ENCODE measurements at regions of chr12 and their contacts with region 1.

Region 1: DNA sequence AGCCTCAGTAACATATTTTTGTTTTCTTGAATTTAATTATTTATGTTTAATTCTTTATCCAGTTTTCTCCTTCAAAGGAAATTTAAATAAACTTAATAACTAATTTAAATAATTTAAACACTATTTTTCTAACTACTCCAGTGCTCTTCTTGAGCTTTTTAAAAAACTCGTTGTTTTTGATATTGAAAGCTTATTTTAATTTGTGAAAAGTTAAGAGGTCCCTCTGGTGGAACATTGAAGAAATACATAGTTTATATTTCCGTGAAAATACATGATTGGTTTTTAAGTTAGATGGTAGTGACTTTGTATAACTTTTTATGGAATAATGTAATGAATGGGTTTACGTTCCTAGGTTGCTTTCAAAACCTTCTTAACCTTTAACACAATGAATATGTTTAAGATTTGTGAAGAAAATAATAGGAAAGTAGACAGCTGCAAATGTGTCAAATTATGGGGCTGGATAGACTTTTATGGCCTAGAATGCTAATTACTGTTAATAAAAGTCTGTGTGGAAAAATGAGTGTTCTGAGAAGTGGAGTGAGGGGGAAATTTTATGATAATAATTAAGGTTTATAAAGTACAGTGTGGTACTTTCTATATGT is 45.9 kb upstream of the MSRB3 start:
- DNase-seq: no peak
- ATAC-seq: peak; percentile 50; the same call in 1 of the 3 replicates
- H3K4me3 ChIP-seq: no peak overlapping the region
- H3K27ac ChIP-seq: no peak overlapping the region
- H3K4me1 ChIP-seq: no peaks in the 10 kb centered on the region
- H3K27me3 ChIP-seq: no peaks in the 10 kb centered on the region
- CTCF ChIP-seq: peak in 1 of 3 experiments; percentile 33; a peak in 3 of 6 replicates
- EP300 ChIP-seq: no peak
- POLR2A ChIP-seq: no peak
- RAD21 ChIP-seq: peak; percentile 57

Region 2: DNA sequence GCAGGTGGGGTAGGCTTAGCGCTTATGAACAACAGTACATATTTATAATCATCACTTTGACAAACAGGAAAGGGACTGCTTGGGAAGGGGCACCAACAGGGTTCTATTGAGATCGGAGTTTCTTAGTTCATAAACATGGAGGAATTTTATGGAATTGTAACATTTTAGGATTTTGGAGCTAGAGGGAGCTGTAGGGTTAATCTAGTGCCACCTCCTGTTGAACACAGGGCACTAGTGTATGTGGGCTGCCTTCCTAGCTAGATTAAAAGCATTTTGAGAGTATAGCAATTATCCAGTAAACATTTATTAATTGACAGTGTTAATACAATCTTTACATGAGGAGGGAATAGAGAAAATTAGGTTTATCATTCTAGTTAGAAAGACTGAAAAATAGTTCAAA is 431.2 kb before region 1 on chr12:
- CTCF ChIA-PET with region 1: interaction called, 38 read pairs
- POLR2A ChIA-PET with region 1: no interaction called
- RAD21 ChIA-PET with region 1: interaction called, 39 read pairs
- SMC1A ChIA-PET with region 1: interaction called, 29 read pairs
- in situ Hi-C with region 1: loop called (anchors 10 kb)
- intact Hi-C with region 1: loop called (anchors 2 kb)
- DNase-seq: no peak
- ATAC-seq: peak; percentile 46
- H3K4me3 ChIP-seq: no peak overlapping the region
- H3K27ac ChIP-seq: peak overlapping the region; percentile 69
- H3K4me1 ChIP-seq: peaks cover 19% of the 10 kb centered on the region
- H3K27me3 ChIP-seq: no peaks in the 10 kb centered on the region
- CTCF ChIP-seq: peak; percentile 9 to 47 (median 28); a peak in 5 of 6 replicates
- EP300 ChIP-seq: no peak
- POLR2A ChIP-seq: no peak
- RAD21 ChIP-seq: no peak

Region 3: GRCh38 chr12:65106948-65107347 is 125.6 kb before region 1 on chr12:
- CTCF ChIA-PET with region 1: interaction called, 22 read pairs
- POLR2A ChIA-PET with region 1: no interaction called
- RAD21 ChIA-PET with region 1: interaction called, 8 read pairs
- SMC1A ChIA-PET with region 1: interaction called, 18 read pairs
- in situ Hi-C with region 1: no loop called
- intact Hi-C with region 1: no loop called
- DNase-seq: no peak
- ATAC-seq: no peak
- H3K4me3 ChIP-seq: no peak overlapping the region
- H3K27ac ChIP-seq: no peak overlapping the region
- H3K4me1 ChIP-seq: no peaks in the 10 kb centered on the region
- H3K27me3 ChIP-seq: no peaks in the 10 kb centered on the region; a peak in 1 of 4 replicates
- CTCF ChIP-seq: peak; percentile 33 to 50 (median 39); a peak in 4 of 6 replicates
- EP300 ChIP-seq: no peak
- POLR2A ChIP-seq: no peak
- RAD21 ChIP-seq: peak; percentile 33

Region 4: DNA sequence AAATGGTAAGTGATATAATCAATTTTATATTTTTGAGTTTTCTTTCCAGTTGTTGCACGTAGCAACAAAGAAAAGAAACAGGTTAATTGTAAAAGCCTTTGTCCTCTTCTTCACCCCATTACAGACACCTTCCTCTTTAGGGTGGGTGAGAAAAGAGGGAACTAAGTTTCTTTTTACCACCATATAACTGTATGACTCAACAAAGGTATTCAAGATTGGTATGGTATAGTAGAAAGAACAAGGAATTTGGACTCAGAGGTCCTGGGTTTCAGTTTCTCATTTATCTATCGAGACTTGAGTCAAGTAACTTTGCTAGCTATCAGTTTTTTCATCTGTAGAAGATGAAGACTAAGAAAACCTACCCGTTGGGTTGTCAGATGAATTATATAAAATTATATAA is 68.8 kb before region 1 on chr12:
- CTCF ChIA-PET with region 1: interaction called, 27 read pairs
- POLR2A ChIA-PET with region 1: interaction called, 4 read pairs
- RAD21 ChIA-PET with region 1: interaction called, 91 read pairs
- SMC1A ChIA-PET with region 1: interaction called, 66 read pairs
- in situ Hi-C with region 1: no loop called
- intact Hi-C with region 1: no loop called
- DNase-seq: no peak
- ATAC-seq: peak; percentile 92
- H3K4me3 ChIP-seq: no peak overlapping the region
- H3K27ac ChIP-seq: no peak overlapping the region
- H3K4me1 ChIP-seq: peaks cover 16% of the 10 kb centered on the region
- H3K27me3 ChIP-seq: no peaks in the 10 kb centered on the region
- CTCF ChIP-seq: no peak
- EP300 ChIP-seq: no peak
- POLR2A ChIP-seq: no peak
- RAD21 ChIP-seq: no peak

Region 5: GRCh38 chr12:65189028-65189718 is 43.4 kb before region 1 on chr12:
- CTCF ChIA-PET with region 1: interaction called, 7 read pairs
- POLR2A ChIA-PET with region 1: interaction called, 5 read pairs
- RAD21 ChIA-PET with region 1: interaction called, 12 read pairs
- SMC1A ChIA-PET with region 1: interaction called, 19 read pairs
- in situ Hi-C with region 1: no loop called
- intact Hi-C with region 1: no loop called
- DNase-seq: no peak
- ATAC-seq: peak; percentile 91
- H3K4me3 ChIP-seq: peak overlapping the region; percentile 30; the same call in 1 of the 2 replicates
- H3K27ac ChIP-seq: peak overlapping the region; percentile 83
- H3K4me1 ChIP-seq: peaks cover 33% of the 10 kb centered on the region
- H3K27me3 ChIP-seq: no peaks in the 10 kb centered on the region
- CTCF ChIP-seq: no peak
- EP300 ChIP-seq: peak in 1 of 2 experiments; percentile 48; a peak in 1 of 4 replicates
- POLR2A ChIP-seq: no peak
- RAD21 ChIP-seq: no peak

Region 6: DNA sequence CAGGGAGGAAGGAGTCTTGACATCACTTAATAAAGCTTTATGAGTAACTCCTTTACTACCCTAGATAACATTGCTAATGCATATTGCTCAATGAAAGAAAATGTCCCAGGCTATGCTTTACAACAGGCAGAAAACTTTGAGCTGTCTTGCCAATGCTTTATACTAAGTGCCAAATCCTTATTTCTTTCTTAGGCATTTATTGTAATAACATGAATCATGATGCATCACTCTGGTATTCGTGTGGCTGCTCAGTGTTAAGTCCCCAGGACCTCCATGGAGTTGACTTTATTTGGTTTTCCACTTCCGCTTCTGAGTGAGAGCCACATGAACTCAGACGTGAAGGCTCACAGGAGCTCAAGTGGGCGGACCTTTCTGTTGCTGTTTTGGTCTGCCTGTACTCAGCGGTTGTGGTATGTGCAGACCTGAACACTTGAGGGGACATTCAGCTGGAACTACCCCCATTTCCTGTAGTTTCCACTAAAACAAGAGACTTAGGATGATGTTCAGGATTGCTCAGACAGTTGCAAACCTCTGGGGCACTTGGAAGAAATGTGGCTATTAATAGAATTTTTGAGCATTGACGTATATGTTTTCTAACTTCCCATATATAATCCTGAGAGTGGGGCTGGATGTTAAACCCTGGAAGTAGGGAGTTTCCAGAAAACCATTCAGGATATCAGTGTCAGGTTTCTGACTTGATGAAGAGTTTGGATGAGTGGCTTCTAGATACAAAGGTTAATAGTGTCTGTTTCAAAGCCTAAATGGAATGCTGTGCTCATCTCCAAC is 304.5 kb after region 1 on chr12:
- CTCF ChIA-PET with region 1: no interaction called
- POLR2A ChIA-PET with region 1: no interaction called
- RAD21 ChIA-PET with region 1: no interaction called
- SMC1A ChIA-PET with region 1: no interaction called
- in situ Hi-C with region 1: no loop called
- intact Hi-C with region 1: no loop called
- DNase-seq: no peak
- ATAC-seq: peak; percentile 77
- H3K4me3 ChIP-seq: no peak overlapping the region
- H3K27ac ChIP-seq: no peak overlapping the region
- H3K4me1 ChIP-seq: no peaks in the 10 kb centered on the region
- H3K27me3 ChIP-seq: no peaks in the 10 kb centered on the region
- CTCF ChIP-seq: no peak
- EP300 ChIP-seq: no peak
- POLR2A ChIP-seq: no peak
- RAD21 ChIP-seq: no peak